Esophagus muscularis mucosa (tissue), 4 donors: ENCODE measurements at regions of chr2 and their contacts with region 1.

Region 1: DNA sequence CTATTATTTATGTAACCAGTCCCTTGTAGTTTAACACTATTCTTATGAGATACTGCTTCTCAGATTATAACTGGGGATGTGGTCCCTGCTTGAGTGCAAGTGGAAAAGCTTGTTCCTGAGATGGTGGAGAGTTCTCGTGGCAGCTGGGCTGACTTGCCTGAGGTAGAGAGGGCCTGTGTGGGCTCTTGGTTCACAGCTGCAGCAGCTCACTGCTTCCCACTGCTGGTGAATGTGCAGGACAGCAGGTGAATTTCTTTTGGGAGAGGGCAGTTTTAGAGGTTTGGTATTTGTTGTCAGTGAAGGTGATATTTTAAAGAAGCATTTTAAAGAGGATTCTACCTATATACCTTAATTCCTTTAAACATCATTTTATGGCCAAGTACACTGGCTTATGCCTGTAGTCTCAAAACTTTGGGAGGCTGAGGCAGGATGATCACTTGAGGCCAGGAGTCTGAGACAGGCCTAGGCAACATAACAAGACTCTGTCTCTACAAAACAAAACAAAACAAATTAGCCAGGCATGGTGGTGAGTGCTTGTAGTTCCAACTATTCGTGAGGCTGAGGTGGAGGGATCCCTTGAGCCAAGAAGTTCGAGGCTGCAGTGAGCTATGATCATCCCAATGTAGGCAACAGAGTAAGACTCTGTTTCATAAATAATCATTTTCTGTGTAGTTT is 94.8 kb downstream of the MTA3 start:
- DNase-seq: no peak
- H3K4me3 ChIP-seq: no peak overlapping the region
- H3K27ac ChIP-seq: no peak overlapping the region
- H3K4me1 ChIP-seq: peaks cover 6 to 16% (median 6%) of the 10 kb centered on the region in 4 donors
- H3K27me3 ChIP-seq: no peaks in the 10 kb centered on the region
- CTCF ChIP-seq: peak; percentile 92 to 98 (median 96)
- EP300 ChIP-seq: no peak
- POLR2A ChIP-seq: no peak

Region 2: GRCh38 chr2:42494355-42495233 is 168.6 kb before region 1 on chr2:
- intact Hi-C with region 1: loop called (anchors 5 kb)
- DNase-seq: no peak
- H3K4me3 ChIP-seq: peak overlapping the region; percentile 61 to 76 (median 64)
- H3K27ac ChIP-seq: peak overlapping the region in 3 of 4 donors; percentile 11 to 49 (median 49)
- H3K4me1 ChIP-seq: peaks cover 7 to 26% (median 26%) of the 10 kb centered on the region in 4 donors
- H3K27me3 ChIP-seq: peaks cover 9 to 49% (median 21%) of the 10 kb centered on the region in 4 donors
- CTCF ChIP-seq: peak; percentile 73 to 90 (median 80)
- EP300 ChIP-seq: no peak
- POLR2A ChIP-seq: no peak

Region 3: DNA sequence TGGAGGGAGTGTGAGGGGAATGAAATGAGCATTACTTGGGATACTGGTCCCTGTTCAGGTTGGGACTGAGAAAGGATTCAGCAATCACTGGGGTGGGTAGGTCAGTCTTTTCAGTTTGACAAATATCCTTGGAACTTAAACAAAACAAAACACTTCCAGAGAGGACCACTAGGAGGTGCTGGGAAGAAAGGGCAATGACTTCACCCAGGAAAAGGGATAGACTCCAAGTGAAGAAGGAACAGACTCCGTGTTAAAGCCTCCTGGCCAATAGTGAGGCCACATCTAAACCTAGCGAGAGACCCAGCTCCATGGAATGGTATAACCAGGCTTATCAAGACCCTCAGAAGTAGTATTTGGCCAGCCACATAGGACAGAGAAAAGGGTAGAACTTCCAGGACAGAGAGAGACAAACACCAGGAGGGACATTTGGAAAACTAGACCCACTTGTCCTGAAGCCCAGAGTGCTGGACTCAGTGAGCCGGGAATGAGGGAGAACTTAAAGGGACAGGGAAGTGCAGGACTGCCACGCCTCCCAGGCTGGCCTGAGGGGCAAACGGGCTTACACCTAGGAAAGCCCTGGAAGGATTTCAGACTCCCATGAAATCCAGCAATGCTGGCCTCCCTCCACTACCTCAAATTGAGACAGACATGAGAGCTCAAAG is 149.9 kb before region 1 on chr2:
- intact Hi-C with region 1: loop called (anchors 1 kb)
- DNase-seq: no peak
- H3K4me3 ChIP-seq: no peak overlapping the region
- H3K27ac ChIP-seq: no peak overlapping the region
- H3K4me1 ChIP-seq: no peaks in the 10 kb centered on the region
- H3K27me3 ChIP-seq: no peaks in the 10 kb centered on the region
- CTCF ChIP-seq: peak; percentile 60 to 74 (median 67)
- EP300 ChIP-seq: no peak
- POLR2A ChIP-seq: no peak